CD8-positive, alpha-beta T cell (primary cell): ENCODE measurements at regions of chr11 and their contacts with region 1.

Region 1: DNA sequence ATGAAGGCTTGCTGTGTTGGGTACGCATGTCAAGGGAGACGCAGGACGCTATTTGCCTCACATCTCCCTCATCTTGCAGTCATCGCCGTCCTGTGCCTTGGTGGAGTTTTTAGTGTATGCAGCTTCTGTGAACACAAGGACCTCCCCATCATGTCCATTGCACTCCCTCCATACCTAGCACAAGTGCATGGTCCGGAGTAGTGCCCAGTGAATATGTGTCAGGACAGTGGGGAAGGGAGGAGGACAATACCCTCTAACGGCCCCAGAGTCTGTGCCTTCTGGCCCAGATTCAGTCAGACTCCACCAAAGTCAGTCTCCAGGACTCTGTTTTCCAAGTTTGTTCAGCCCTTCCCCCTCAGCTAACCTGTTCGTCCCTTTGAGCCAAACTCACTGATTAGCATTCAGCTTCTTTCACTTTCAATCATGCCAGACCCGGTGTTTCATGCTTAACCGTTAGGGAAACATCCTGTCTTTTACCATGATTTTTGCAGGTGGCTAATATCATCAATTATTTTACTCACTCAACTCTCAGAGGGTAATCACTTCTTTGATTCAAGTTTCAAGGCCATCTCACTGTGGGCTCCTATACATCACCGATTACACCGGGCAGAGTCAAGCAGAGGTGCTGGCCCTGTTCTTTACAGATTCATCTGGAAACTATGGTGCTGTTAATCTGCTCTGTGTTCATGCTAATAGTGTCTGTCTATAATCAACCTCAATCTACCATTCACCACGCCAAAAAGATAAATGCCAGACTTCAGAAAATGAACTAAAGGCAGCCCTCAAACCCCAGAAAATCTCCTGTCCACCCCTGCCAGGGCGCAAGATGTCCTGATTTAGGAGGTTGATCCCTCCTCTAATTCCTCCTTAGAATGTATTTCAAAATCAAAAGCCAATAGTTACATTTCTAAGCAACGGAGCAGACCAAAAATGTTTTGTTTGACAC is 156.5 kb downstream of the RRAS2 start:
- DNase-seq: no peak
- ATAC-seq: no peak
- H3K4me3 ChIP-seq: no peak overlapping the region
- H3K4me3 Mint-ChIP-seq: no peak overlapping the region
- H3K27ac ChIP-seq: no peak overlapping the region
- H3K27ac Mint-ChIP-seq: no peak overlapping the region
- H3K4me1 ChIP-seq: no peaks in the 10 kb centered on the region
- H3K4me1 Mint-ChIP-seq: peaks cover 4% of the 10 kb centered on the region
- H3K27me3 ChIP-seq: no peaks in the 10 kb centered on the region
- H3K27me3 Mint-ChIP-seq: no peaks in the 10 kb centered on the region
- CTCF ChIP-seq: no peak

Region 2: GRCh38 chr11:14163576-14163975 is 38.9 kb before region 1 on chr11:
- CTCF ChIA-PET with region 1: no interaction called
- POLR2A ChIA-PET with region 1: no interaction called
- intact Hi-C with region 1: no loop called
- DNase-seq: no peak
- ATAC-seq: no peak
- H3K4me3 ChIP-seq: no peak overlapping the region
- H3K4me3 Mint-ChIP-seq: no peak overlapping the region
- H3K27ac ChIP-seq: no peak overlapping the region
- H3K27ac Mint-ChIP-seq: no peak overlapping the region
- H3K4me1 ChIP-seq: no peaks in the 10 kb centered on the region
- H3K4me1 Mint-ChIP-seq: peaks cover 2% of the 10 kb centered on the region
- H3K27me3 ChIP-seq: no peaks in the 10 kb centered on the region
- H3K27me3 Mint-ChIP-seq: no peaks in the 10 kb centered on the region
- CTCF ChIP-seq: no peak

Region 3: GRCh38 chr11:14179126-14179820 is 23.3 kb before region 1 on chr11:
- CTCF ChIA-PET with region 1: no interaction called
- POLR2A ChIA-PET with region 1: no interaction called
- intact Hi-C with region 1: loop called in 1 of 2 experiments (anchors 1 kb)
- DNase-seq: no peak
- ATAC-seq: no peak
- H3K4me3 ChIP-seq: no peak overlapping the region
- H3K4me3 Mint-ChIP-seq: no peak overlapping the region
- H3K27ac ChIP-seq: no peak overlapping the region
- H3K27ac Mint-ChIP-seq: no peak overlapping the region
- H3K4me1 ChIP-seq: no peaks in the 10 kb centered on the region
- H3K4me1 Mint-ChIP-seq: peaks cover 12% of the 10 kb centered on the region
- H3K27me3 ChIP-seq: no peaks in the 10 kb centered on the region
- H3K27me3 Mint-ChIP-seq: no peaks in the 10 kb centered on the region
- CTCF ChIP-seq: no peak

Region 4: DNA sequence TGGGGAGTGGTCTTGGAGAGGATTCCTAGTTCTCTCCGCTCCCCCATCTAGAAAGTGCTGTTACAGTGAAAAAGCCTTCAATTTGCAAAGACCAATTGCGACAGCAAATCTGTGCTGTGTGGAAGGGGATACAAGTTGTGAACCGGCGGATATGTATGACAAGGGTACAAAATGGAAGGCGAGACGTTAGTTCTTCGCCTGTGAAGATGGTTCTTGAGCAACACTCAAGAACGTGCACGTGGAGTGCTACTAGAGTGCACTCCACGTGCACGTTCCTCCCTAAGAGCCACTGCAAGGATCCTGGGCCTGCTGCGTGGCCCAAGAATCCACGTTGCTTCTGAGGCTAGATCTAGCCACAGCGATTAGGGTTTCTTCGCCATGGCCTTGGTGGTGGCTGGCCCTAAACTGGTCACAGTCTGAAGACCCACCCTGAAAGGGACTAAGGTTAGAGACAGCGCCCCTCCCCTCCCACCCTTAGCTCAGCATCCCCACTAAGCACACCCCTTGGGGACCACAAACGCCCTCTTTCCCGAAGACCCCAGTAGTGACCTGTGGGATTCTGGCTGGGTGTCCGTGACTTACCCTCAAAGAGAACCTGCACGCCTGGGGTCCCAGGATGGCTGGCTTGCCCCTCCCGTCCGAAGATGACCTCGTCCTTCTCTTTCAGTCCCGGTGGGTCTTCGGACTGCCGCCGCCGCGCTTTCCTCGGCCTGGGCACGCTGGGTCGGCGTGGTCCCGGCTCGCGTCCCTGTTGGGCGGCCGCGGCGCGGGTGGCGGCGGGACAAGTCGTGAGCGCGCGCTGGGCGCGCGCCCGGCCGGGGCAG is 440.6 kb after region 1 on chr11:
- CTCF ChIA-PET with region 1: no interaction called
- POLR2A ChIA-PET with region 1: no interaction called
- intact Hi-C with region 1: no loop called
- DNase-seq: peak in 3 of 9 experiments; percentile 25 to 53 (median 31)
- ATAC-seq: no peak
- H3K4me3 ChIP-seq: peak overlapping the region; percentile 86 to 95
- H3K4me3 Mint-ChIP-seq: peak overlapping the region; percentile 91
- H3K27ac ChIP-seq: peak overlapping the region; percentile 59 to 86
- H3K27ac Mint-ChIP-seq: peak overlapping the region; percentile 91
- H3K4me1 ChIP-seq: peaks cover 41% of the 10 kb centered on the region
- H3K4me1 Mint-ChIP-seq: peaks cover 53% of the 10 kb centered on the region
- H3K27me3 ChIP-seq: no peaks in the 10 kb centered on the region
- H3K27me3 Mint-ChIP-seq: no peaks in the 10 kb centered on the region
- CTCF ChIP-seq: no peak